ENCODE measurements at regions of chr2 and their contacts with region 1.

Region 1: DNA sequence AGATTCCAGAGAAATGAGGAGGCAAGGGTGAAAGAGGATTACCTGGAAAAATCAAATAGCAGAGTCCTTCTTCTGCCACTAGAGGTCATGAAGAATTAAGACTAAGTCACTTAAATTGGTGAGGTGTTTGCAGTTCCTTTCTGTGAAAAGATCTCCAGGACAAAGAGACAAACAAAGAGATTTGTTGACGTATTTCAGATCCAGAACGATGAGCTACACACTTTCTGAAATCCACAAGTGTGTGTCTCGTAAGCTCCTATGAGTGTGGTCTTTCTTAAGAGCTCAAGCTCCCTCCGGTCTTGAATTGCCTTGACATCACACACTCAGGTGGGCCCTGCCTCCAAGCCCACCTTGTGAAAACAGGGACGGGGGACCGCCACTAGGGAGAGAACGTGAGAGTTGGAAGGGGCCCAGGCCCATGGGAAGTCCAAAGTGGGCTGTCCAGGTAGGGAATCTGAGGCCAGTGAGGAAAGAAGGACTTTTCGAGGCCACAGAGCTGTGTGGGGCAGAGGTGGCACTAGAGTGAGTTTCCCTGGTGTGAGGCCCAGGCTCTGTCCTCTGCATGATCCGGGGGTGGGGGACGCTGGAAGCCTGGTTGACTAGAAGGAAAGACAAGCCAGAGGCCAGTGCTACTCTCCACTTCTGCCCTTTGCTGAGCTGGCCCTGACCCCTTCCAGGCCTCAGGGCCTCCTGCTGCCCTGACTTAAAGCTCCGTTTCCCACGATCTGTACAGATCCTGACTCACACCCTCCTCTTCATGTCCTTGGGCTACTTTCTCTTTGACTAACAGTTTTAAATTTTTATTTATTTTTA is 168.1 kb upstream of the NCK2 start:
- DNase-seq: peak in 7 of 9 donors; percentile 24 to 70 (median 50)
- ATAC-seq: peak; percentile 73
- H3K4me3 ChIP-seq: no peak overlapping the region
- H3K4me3 Mint-ChIP-seq: peak overlapping the region in 5 of 10 donors; percentile 1 to 41 (median 26)
- H3K27ac ChIP-seq: peak overlapping the region; percentile 39
- H3K27ac Mint-ChIP-seq: peak overlapping the region; percentile 74 to 95 (median 89)
- H3K4me1 ChIP-seq: peaks cover 3 to 16% of the 10 kb centered on the region in 2 donors
- H3K4me1 Mint-ChIP-seq: peaks cover 13 to 30% (median 20%) of the 10 kb centered on the region in 7 donors
- H3K27me3 ChIP-seq: no peaks in the 10 kb centered on the region
- H3K27me3 Mint-ChIP-seq: peaks cover 0 to 7% (median 0%) of the 10 kb centered on the region in 5 donors

Region 2: DNA sequence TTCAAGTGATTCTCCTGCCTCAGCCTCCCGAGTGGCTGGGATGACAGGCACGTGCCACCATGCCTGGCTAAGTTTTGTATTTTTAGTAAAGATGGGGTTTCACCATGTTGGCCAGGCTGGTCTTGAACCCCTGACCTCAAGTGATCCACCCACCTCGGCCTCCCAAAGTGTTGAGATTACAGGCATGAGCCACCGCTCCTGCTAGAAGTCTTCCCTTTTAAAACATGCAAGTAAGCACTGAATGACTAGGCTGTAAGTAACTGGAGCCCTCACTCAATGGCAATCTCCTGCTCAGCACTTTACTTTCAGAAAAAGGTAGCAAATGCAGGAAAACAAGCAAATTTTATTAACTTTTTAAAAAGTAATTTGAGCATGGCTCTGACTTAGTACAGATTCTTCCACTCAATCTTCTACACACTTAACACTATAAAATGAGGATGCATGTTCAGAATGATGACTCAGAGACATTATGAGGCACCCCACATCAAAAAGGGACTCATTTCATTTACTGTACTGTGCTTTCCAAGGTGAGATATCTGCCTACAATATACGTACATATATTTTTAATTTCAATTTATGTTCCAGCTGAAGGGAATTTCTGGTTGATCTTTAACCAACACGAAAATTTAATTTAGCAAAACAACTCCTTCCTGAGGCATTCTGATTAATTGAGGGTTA is 161.5 kb after region 1 on chr2:
- CTCF ChIA-PET with region 1: interaction called, 5 read pairs
- POLR2A ChIA-PET with region 1: interaction called, 3 read pairs
- intact Hi-C with region 1: loop called in 1 of 2 experiments (anchors 2 kb)
- DNase-seq: peak in 6 of 9 donors; percentile 56 to 77 (median 70)
- ATAC-seq: peak; percentile 88
- H3K4me3 ChIP-seq: peak overlapping the region; percentile 37
- H3K4me3 Mint-ChIP-seq: peak overlapping the region; percentile 54 to 84 (median 80)
- H3K27ac ChIP-seq: peak overlapping the region; percentile 74
- H3K27ac Mint-ChIP-seq: peak overlapping the region; percentile 90 to 99 (median 96)
- H3K4me1 ChIP-seq: peaks cover 40 to 41% of the 10 kb centered on the region in 2 donors
- H3K4me1 Mint-ChIP-seq: peaks cover 47 to 88% (median 83%) of the 10 kb centered on the region in 7 donors
- H3K27me3 ChIP-seq: no peaks in the 10 kb centered on the region
- H3K27me3 Mint-ChIP-seq: no peaks in the 10 kb centered on the region

Region 3: GRCh38 chr2:105789745-105790460 is 213.3 kb after region 1 on chr2:
- CTCF ChIA-PET with region 1: no interaction called
- POLR2A ChIA-PET with region 1: no interaction called
- intact Hi-C with region 1: loop called (anchors 1 to 5 kb)
- DNase-seq: peak in 6 of 9 donors; percentile 38 to 78 (median 53)
- ATAC-seq: peak; percentile 79
- H3K4me3 ChIP-seq: peak overlapping the region; percentile 38
- H3K4me3 Mint-ChIP-seq: peak overlapping the region; percentile 52 to 89 (median 72)
- H3K27ac ChIP-seq: peak overlapping the region; percentile 63
- H3K27ac Mint-ChIP-seq: peak overlapping the region; percentile 81 to 99 (median 92)
- H3K4me1 ChIP-seq: peaks cover 86 to 92% of the 10 kb centered on the region in 2 donors
- H3K4me1 Mint-ChIP-seq: peaks cover 62 to 100% (median 94%) of the 10 kb centered on the region in 7 donors
- H3K27me3 ChIP-seq: no peaks in the 10 kb centered on the region
- H3K27me3 Mint-ChIP-seq: no peaks in the 10 kb centered on the region

Region 4: GRCh38 chr2:105888625-105889400 is 312.2 kb after region 1 on chr2:
- CTCF ChIA-PET with region 1: interaction called, 5 read pairs
- POLR2A ChIA-PET with region 1: no interaction called
- intact Hi-C with region 1: loop called (anchors 5 to 10 kb)
- DNase-seq: no peak
- ATAC-seq: peak; percentile 74
- H3K4me3 ChIP-seq: no peak overlapping the region
- H3K4me3 Mint-ChIP-seq: peak overlapping the region in 3 of 10 donors; percentile 13 to 52 (median 37)
- H3K27ac ChIP-seq: no peak overlapping the region
- H3K27ac Mint-ChIP-seq: peak overlapping the region in 5 of 9 donors; percentile 44 to 83 (median 53)
- H3K4me1 ChIP-seq: peaks cover 38 to 44% of the 10 kb centered on the region in 2 donors
- H3K4me1 Mint-ChIP-seq: peaks cover 36 to 76% (median 67%) of the 10 kb centered on the region in 7 donors
- H3K27me3 ChIP-seq: no peaks in the 10 kb centered on the region
- H3K27me3 Mint-ChIP-seq: no peaks in the 10 kb centered on the region

Region 5: GRCh38 chr2:105969555-105969954 is 392.9 kb after region 1 on chr2:
- CTCF ChIA-PET with region 1: no interaction called
- POLR2A ChIA-PET with region 1: no interaction called
- intact Hi-C with region 1: loop called in 1 of 2 experiments (anchors 2 kb)
- DNase-seq: no peak
- ATAC-seq: no peak
- H3K4me3 ChIP-seq: no peak overlapping the region
- H3K4me3 Mint-ChIP-seq: no peak overlapping the region
- H3K27ac ChIP-seq: no peak overlapping the region
- H3K27ac Mint-ChIP-seq: no peak overlapping the region
- H3K4me1 ChIP-seq: peaks cover 0 to 27% of the 10 kb centered on the region in 2 donors
- H3K4me1 Mint-ChIP-seq: peaks cover 8 to 61% (median 37%) of the 10 kb centered on the region in 7 donors
- H3K27me3 ChIP-seq: no peaks in the 10 kb centered on the region
- H3K27me3 Mint-ChIP-seq: peaks cover 0 to 2% (median 0%) of the 10 kb centered on the region in 5 donors

Region 6: GRCh38 chr2:106104332-106105062 is 527.9 kb after region 1 on chr2:
- CTCF ChIA-PET with region 1: interaction called, 19 read pairs
- POLR2A ChIA-PET with region 1: no interaction called
- intact Hi-C with region 1: loop called in 1 of 2 experiments (anchors 1 kb)
- DNase-seq: peak in 8 of 9 donors; percentile 55 to 78 (median 70)
- ATAC-seq: peak; percentile 84
- H3K4me3 ChIP-seq: no peak overlapping the region
- H3K4me3 Mint-ChIP-seq: no peak overlapping the region
- H3K27ac ChIP-seq: no peak overlapping the region
- H3K27ac Mint-ChIP-seq: peak overlapping the region in 7 of 9 donors; percentile 3 to 73 (median 21)
- H3K4me1 ChIP-seq: no peaks in the 10 kb centered on the region
- H3K4me1 Mint-ChIP-seq: peaks cover 0 to 20% (median 13%) of the 10 kb centered on the region in 7 donors
- H3K27me3 ChIP-seq: no peaks in the 10 kb centered on the region
- H3K27me3 Mint-ChIP-seq: no peaks in the 10 kb centered on the region

Region 7: DNA sequence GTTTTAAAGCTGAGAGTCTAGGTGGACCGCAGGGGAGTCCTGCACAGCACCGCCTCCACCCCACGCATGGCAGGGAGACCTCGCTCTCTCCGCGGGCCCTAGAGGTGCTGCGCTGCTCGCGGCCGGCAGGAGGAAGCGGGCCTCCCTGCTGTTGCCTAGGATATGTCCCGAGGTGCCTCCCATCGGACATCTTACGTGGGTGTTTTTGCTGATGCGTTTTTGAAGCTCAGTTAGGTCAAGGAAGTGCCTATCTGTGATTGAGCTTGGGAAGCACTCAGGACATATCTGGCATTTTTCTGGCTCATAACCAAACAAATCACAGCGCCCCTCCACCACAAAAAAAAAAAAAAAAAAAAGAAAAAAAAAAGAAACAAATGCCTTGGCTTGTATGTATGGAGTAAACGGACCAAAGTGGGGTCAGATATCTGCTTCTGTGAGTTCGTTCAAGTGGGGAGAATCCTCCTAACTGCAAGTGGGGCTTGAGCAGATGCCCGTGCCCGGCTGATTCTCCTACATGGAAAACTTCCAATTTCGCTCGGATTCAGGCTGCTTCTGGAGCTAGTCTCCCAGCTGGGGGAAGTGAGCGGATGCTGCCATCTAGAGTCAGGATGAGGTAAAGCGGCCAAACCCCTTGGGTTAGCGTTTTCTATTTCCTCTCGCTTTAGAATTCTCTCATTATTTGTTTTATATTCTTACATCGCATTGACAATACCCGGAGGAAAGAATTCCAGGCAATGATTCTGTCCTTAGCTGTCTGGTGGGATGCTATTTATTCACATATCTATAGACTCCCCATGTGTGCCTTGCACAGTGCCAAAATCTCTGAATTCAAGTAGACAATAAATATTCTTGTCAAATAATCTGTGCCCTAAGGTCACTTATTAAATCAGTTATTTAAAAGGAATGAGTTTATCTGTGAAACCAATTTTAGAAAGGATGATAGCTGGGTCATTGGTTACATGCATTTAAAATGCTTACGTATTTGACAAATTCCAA is 1005.8 kb after region 1 on chr2:
- CTCF ChIA-PET with region 1: no interaction called
- POLR2A ChIA-PET with region 1: no interaction called
- intact Hi-C with region 1: loop called in 1 of 2 experiments (anchors 10 kb)
- DNase-seq: peak; percentile 25 to 71 (median 56)
- ATAC-seq: peak; percentile 83
- H3K4me3 ChIP-seq: peak overlapping the region; percentile 56
- H3K4me3 Mint-ChIP-seq: peak overlapping the region; percentile 75 to 95 (median 92)
- H3K27ac ChIP-seq: no peak overlapping the region
- H3K27ac Mint-ChIP-seq: peak overlapping the region in 5 of 9 donors; percentile 43 to 82 (median 67)
- H3K4me1 ChIP-seq: peaks cover 0 to 14% of the 10 kb centered on the region in 2 donors
- H3K4me1 Mint-ChIP-seq: peaks cover 4 to 17% (median 13%) of the 10 kb centered on the region in 7 donors
- H3K27me3 ChIP-seq: no peaks in the 10 kb centered on the region
- H3K27me3 Mint-ChIP-seq: peaks cover 33 to 60% (median 45%) of the 10 kb centered on the region in 5 donors

Measured in naive thymus-derived CD4-positive, alpha-beta T cell (primary cell).